ENCODE measurements at regions of chr4 and their contacts with region 1.

Region 1: GRCh38 chr4:22356987-22357596 is 158.8 kb downstream of the ADGRA3 start:
- DNase-seq: no peak
- H3K4me3 Mint-ChIP-seq: no peak overlapping the region
- H3K27ac Mint-ChIP-seq: no peak overlapping the region
- H3K4me1 Mint-ChIP-seq: no peaks in the 10 kb centered on the region
- H3K27me3 Mint-ChIP-seq: peaks cover 3% of the 10 kb centered on the region

Region 2: GRCh38 chr4:21790438-21791029 is 566.6 kb before region 1 on chr4:
- CTCF ChIA-PET with region 1: interaction called, 18 read pairs
- DNase-seq: no peak
- H3K4me3 Mint-ChIP-seq: no peak overlapping the region
- H3K27ac Mint-ChIP-seq: no peak overlapping the region
- H3K4me1 Mint-ChIP-seq: no peaks in the 10 kb centered on the region
- H3K27me3 Mint-ChIP-seq: no peaks in the 10 kb centered on the region